Sigmoid colon (tissue), 7 donors: ENCODE measurements at regions of chrX and their contacts with region 1.

Region 1: GRCh38 chrX:155216179-155216939 is at the start of gene VBP1:
- DNase-seq: peak; percentile 97
- H3K4me3 ChIP-seq: peak within 1 kb of the TSS; percentile 56 to 75 (median 72)
- H3K27ac ChIP-seq: peak within 1 kb of the TSS; percentile 89 to 93 (median 90)
- H3K4me1 ChIP-seq: peaks cover 0 to 19% (median 8%) of the 10 kb centered on the region in 4 donors
- H3K27me3 ChIP-seq: no peaks in the 10 kb centered on the region
- CTCF ChIP-seq: peak; percentile 26 to 58 (median 30)
- EP300 ChIP-seq: no peak
- POLR2A ChIP-seq: no peak
- total RNA-seq, gene VBP1: 28.8 to 55.6 (median 49.2) TPM

Region 2: DNA sequence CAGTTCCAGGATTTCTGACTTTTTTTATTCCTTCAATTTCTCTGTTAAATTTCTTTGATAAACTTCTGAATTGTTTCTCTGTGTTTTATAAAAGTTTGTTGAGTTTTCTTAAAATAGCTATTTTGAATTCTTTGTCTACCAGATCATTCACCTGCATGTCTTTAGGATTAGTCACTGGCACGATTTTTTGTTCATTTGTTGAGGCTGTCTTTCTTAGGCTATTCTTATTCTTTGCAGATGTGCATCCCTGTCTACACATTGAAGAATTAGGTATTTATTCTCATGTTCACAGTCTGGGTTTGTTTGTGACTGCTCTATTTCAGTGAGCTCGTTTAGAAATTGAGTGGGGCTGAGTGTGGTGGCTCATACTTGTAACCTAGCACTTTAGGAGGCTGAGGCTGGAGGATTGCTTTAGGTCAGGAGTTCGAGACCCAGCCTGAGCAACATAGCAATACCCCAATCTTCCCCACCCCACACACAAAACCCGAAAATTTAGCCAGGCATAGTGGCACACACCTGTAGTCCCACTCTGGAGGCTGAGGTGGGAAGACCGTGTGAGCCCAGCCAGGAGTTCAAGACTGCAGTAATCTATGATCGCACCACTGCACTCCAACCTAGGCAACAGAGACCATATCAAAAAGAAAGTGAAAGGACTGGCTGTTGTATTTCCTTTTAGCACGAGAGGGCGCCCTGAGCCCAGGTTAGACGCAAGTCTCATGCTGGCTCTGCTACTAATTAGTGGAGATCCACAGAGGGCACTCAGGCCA is 235.8 kb before region 1 on chrX:
- intact Hi-C with region 1: loop called (anchors 10 kb)
- DNase-seq: peak; percentile 83
- H3K4me3 ChIP-seq: peak overlapping the region; percentile 10 to 46 (median 38)
- H3K27ac ChIP-seq: no peak overlapping the region
- H3K4me1 ChIP-seq: no peaks in the 10 kb centered on the region
- H3K27me3 ChIP-seq: no peaks in the 10 kb centered on the region
- CTCF ChIP-seq: peak; percentile 34 to 65 (median 52)
- EP300 ChIP-seq: no peak
- POLR2A ChIP-seq: no peak

Region 3: DNA sequence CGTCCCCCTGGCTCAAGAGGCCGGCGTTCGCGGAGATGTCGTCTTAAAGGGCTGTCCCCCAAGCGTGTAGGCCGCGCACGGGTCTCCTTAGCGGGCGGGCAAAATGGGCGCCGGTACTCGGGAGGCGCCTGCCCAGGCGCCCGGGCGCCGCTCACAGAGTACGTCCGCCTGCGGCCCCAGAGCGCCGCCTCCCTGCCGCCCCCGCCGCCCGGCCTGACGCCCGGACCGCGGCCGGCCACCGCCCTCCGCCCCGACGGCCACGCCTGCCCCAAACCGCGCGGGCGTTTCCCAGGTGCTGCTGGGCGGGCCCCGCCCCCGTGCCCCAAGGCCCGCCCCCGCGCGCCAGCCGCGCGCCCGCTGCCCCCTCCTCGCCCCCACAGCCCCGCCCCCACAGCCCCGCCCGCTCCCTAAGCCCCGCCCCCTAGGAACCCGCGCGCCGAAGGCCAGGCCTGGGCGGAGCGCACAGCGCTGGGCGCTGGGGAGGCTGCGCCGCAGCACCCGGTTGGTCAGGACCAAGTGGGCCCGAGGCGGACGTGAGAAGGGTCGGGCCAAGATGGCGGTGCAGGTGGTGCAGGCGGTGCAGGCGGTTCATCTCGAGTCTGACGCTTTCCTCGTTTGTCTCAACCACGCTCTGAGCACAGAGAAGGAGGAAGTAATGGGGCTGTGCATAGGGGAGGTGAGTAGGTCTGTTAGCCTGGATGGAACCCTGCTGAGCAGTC is 145.2 kb before region 1 on chrX and contains the starts of genes BRCC3, CMC4 and MTCP1:
- intact Hi-C with region 1: loop called (anchors 10 kb)
- DNase-seq: peak; percentile 89
- H3K4me3 ChIP-seq: peak within 1 kb of the TSS; percentile 52 to 61 (median 58)
- H3K27ac ChIP-seq: peak within 1 kb of the TSS; percentile 85 to 88 (median 88)
- H3K4me1 ChIP-seq: peaks cover 0 to 26% (median 5%) of the 10 kb centered on the region in 4 donors
- H3K27me3 ChIP-seq: no peaks in the 10 kb centered on the region
- CTCF ChIP-seq: no peak
- EP300 ChIP-seq: no peak
- POLR2A ChIP-seq: peak; percentile 31 to 38
- total RNA-seq, gene BRCC3: 12.8 to 15.3 (median 14.2) TPM
- total RNA-seq, gene CMC4: 19.4 to 37.2 (median 30.2) TPM
- total RNA-seq, gene MTCP1: 3.1 to 3.9 (median 3.7) TPM

Region 4: GRCh38 chrX:155612312-155613224 is 396.2 kb after region 1 on chrX and contains the start of gene TMLHE:
- intact Hi-C with region 1: loop called (anchors 10 kb)
- DNase-seq: peak; percentile 76
- H3K4me3 ChIP-seq: peak within 1 kb of the TSS; percentile 65 to 70 (median 68)
- H3K27ac ChIP-seq: peak within 1 kb of the TSS; percentile 85 to 90 (median 88)
- H3K4me1 ChIP-seq: peaks cover 0 to 11% (median 7%) of the 10 kb centered on the region in 4 donors
- H3K27me3 ChIP-seq: no peaks in the 10 kb centered on the region
- CTCF ChIP-seq: no peak
- EP300 ChIP-seq: no peak
- POLR2A ChIP-seq: no peak
- total RNA-seq, gene TMLHE: 16.3 to 34.8 (median 25.8) TPM